ENCODE measurements at regions of chr12 and their contacts with region 1.

Region 1: GRCh38 chr12:88299567-88300101 is 157.5 kb downstream of the TMTC3 start:
- DNase-seq: peak; percentile 75
- H3K4me3 Mint-ChIP-seq: peak overlapping the region; percentile 52
- H3K27ac Mint-ChIP-seq: peak overlapping the region; percentile 87
- H3K4me1 Mint-ChIP-seq: peaks cover 26% of the 10 kb centered on the region
- H3K27me3 Mint-ChIP-seq: no peaks in the 10 kb centered on the region

Region 2: GRCh38 chr12:88035271-88035906 is 264.2 kb before region 1 on chr12:
- intact Hi-C with region 1: loop called (anchors 5 kb)
- DNase-seq: peak; percentile 97
- H3K4me3 Mint-ChIP-seq: peak overlapping the region; percentile 99
- H3K27ac Mint-ChIP-seq: peak overlapping the region; percentile 98
- H3K4me1 Mint-ChIP-seq: peaks cover 40% of the 10 kb centered on the region
- H3K27me3 Mint-ChIP-seq: no peaks in the 10 kb centered on the region

Region 3: DNA sequence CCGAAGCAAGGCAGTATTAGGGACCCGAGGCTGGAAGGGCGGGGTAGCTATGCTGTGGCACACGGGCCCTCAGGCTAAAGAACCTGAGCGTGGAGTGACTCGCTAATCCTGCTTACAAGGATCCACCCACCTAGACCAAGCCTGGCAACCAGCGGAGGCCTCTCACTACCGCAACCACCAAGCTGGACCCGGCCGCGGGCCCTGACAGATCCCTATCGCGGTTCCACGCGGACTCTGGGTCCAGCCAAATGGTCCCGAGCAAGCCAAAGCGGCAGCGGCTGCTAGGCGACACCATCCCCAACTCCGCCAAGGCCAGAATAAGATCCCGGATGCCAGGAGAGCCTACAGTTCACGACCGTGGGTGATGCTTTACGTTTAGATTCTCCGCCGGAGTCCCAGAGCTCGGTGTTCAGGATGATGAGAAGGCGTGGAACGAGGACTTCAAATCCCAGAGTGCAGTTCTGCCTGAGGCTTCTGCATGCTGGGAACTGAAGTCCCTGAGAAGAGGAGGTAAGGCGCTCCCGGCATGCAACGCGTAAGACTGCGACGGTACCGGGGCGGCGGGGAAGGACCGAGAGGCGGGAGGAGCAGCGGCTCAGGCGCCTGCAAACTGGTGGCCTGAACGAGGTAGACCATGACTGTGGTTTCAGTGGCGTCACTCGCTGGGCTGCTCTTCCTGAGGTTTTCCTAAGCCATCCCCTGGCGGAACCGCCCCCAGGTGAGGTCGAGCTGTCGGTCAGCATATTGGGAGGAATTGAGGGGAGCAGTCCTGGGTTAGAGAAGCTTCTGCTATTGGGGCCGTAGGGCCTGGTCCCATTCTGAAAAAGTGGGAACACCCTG is 157.6 kb before region 1 on chr12 and contains the starts of genes CEP290 and TMTC3:
- intact Hi-C with region 1: loop called (anchors 1 kb)
- DNase-seq: peak; percentile 97
- H3K4me3 Mint-ChIP-seq: peak within 1 kb of the TSS; percentile 91
- H3K27ac Mint-ChIP-seq: peak within 1 kb of the TSS; percentile 96
- H3K4me1 Mint-ChIP-seq: peaks cover 32% of the 10 kb centered on the region
- H3K27me3 Mint-ChIP-seq: no peaks in the 10 kb centered on the region
- total RNA-seq, gene CEP290: 17.2 and 17.9 TPM in 2 replicates
- total RNA-seq, gene TMTC3: 8.2 and 8.3 TPM in 2 replicates

Region 4: DNA sequence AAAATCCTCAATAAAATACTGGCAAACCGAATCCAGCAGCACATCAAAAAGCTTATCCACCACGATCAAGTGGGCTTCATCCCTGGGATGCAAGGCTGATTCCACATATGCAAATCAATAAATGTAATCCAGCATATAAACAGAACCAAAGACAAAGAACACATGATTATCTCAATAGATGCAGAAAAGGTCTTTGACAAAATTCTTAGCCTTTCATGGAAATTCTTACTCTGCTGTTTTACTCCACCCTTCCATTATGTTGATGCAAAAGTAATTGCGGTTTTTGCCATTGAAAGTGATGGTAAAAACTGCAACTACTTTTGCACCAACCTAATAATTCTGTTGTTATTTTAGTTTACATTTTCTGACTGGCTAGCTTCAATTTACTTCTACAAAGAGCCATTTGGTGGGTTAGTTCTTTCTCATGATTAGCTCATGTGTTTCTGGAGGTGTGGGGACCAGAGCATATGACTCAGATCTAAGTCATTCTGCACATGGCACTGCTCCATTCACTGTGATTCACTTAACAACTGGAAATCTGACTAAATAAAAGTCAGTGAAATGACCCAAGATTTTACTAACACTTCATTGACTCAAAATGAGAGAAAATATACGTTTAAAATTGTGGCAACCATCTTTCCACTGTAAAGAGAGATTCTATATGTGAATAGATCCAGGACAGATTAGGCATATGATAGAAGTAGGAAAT is 57.6 kb before region 1 on chr12:
- intact Hi-C with region 1: loop called (anchors 1 kb)
- DNase-seq: no peak
- H3K4me3 Mint-ChIP-seq: no peak overlapping the region
- H3K27ac Mint-ChIP-seq: peak overlapping the region; percentile 89
- H3K4me1 Mint-ChIP-seq: peaks cover 19% of the 10 kb centered on the region
- H3K27me3 Mint-ChIP-seq: no peaks in the 10 kb centered on the region

Region 5: DNA sequence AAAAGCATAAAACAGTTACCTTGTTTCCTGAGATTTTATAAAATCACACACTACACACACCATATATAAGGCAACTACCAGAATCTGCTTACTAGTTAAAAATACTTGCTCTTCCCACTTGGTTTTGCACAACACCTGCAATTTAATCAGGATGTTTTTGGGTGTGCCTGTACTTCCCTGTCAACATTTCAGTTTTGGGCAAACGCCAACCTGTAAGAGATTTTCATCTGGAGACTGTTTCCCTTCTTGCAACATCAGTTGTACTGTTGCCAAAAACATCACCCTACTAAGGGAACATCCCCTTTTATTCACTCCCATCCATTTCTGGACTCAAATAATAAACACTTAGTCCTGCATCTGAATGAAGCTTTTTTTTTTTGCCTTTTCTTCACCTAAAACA is 880.3 kb after region 1 on chr12:
- intact Hi-C with region 1: loop called (anchors 5 kb)
- DNase-seq: no peak
- H3K4me3 Mint-ChIP-seq: peak overlapping the region; percentile 38
- H3K27ac Mint-ChIP-seq: peak overlapping the region; percentile 81
- H3K4me1 Mint-ChIP-seq: peaks cover 51% of the 10 kb centered on the region
- H3K27me3 Mint-ChIP-seq: no peaks in the 10 kb centered on the region

Measured in activated CD4-positive, alpha-beta T cell treated with anti-CD3 and anti-CD28 coated beads, Interleukin-2, amount 10 ng/mL, durations not matched to agents 24 days and 14 days (primary cell).